GM12878 (cell line): ENCODE measurements at regions of chr6 and their contacts with region 1.

Region 1: DNA sequence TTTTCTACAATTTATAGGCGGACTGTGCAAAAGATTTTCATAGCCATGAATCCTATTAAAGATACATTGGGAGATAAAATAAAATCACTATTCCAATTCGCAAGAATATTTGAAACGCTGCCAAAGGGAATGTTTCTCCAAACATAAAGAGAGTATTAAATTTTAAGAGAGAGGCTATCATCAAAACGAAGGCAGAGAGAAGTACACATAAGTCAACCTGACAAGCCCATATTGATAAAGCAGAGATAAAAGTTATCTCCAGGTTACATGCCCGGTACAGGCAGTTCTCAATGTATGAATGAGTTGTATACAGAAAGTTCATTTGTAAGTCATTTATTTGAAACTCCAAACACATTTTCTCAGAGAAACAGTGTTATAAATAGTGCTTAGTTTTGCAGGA is 193.1 kb downstream of the ATXN1 start:
- DNase-seq: no peak
- ATAC-seq: no peak
- H3K4me3 ChIP-seq: no peak overlapping the region
- H3K27ac ChIP-seq: no peak overlapping the region
- H3K4me1 ChIP-seq: no peaks in the 10 kb centered on the region
- H3K27me3 ChIP-seq: no peaks in the 10 kb centered on the region
- CTCF ChIP-seq: no peak
- EP300 ChIP-seq: no peak
- POLR2A ChIP-seq: no peak
- RAD21 ChIP-seq: no peak

Region 2: GRCh38 chr6:16540804-16541752 is 27.1 kb before region 1 on chr6:
- CTCF ChIA-PET with region 1: interaction called, 3 read pairs
- POLR2A ChIA-PET with region 1: interaction called, 3 read pairs
- RAD21 ChIA-PET with region 1: no interaction called
- SMC1A ChIA-PET with region 1: interaction called, 10 read pairs
- in situ Hi-C with region 1: no loop called
- intact Hi-C with region 1: no loop called
- DNase-seq: no peak
- ATAC-seq: peak; percentile 93
- H3K4me3 ChIP-seq: no peak overlapping the region
- H3K27ac ChIP-seq: no peak overlapping the region
- H3K4me1 ChIP-seq: peaks cover 7% of the 10 kb centered on the region
- H3K27me3 ChIP-seq: no peaks in the 10 kb centered on the region
- CTCF ChIP-seq: peak; percentile 9 to 26 (median 13); a peak in 3 of 6 replicates
- EP300 ChIP-seq: peak in 1 of 2 experiments; percentile 44; a peak in 1 of 4 replicates
- POLR2A ChIP-seq: no peak
- RAD21 ChIP-seq: 0 out of 2 replicates have a peak, but pooled peaks have one; percentile 23